AG04450 (cell line): ENCODE measurements at regions of chr15 and their contacts with region 1.

Region 1: GRCh38 chr15:69475769-69476358 is 23.2 kb downstream of the RPLP1 start:
- DNase-seq: no peak
- H3K4me3 ChIP-seq: no peak overlapping the region
- H3K27ac ChIP-seq: no peak overlapping the region
- H3K27me3 ChIP-seq: peaks cover 14% of the 10 kb centered on the region
- CTCF ChIP-seq: peak; percentile 99

Region 2: DNA sequence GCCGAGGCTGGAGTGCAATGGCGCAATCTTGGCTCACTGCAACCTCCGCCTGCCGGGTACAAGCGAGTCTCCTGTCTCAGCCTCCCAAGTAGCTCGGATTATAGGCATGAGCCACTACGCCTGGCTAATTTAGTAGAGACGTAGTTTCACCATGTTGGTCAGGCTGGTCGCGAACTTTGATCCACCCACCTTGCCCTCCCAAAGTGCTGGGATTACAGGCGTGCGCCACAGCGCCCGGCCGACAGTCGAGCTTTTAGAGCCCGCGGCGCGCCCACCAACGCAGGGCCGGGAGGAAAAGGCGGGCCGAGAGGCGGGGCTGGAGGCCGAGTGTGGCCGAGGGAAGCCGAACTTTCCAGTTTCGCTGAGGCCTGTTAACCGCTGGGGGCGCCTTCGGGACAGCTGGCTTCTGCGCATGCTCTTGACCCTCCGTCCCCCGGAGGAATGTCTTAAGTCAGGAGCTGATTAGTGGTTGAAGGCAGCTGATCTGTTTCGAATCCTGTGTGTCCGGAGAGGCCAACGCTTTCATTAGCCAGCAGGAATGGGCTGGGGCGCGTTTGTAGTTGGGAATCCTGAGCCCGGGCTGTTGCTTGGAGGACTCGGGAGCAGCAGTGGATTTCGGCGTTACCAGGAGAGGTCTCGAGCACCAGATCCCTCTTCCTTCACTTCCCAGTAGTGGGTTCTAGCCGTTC is 13.2 kb before region 1 on chr15:
- CTCF ChIA-PET with region 1: interaction called, 22 read pairs
- POLR2A ChIA-PET with region 1: no interaction called
- DNase-seq: peak; percentile 98
- H3K4me3 ChIP-seq: peak overlapping the region; percentile 61
- H3K27ac ChIP-seq: peak overlapping the region; percentile 98
- H3K27me3 ChIP-seq: no peaks in the 10 kb centered on the region
- CTCF ChIP-seq: peak; percentile 89

Region 3: DNA sequence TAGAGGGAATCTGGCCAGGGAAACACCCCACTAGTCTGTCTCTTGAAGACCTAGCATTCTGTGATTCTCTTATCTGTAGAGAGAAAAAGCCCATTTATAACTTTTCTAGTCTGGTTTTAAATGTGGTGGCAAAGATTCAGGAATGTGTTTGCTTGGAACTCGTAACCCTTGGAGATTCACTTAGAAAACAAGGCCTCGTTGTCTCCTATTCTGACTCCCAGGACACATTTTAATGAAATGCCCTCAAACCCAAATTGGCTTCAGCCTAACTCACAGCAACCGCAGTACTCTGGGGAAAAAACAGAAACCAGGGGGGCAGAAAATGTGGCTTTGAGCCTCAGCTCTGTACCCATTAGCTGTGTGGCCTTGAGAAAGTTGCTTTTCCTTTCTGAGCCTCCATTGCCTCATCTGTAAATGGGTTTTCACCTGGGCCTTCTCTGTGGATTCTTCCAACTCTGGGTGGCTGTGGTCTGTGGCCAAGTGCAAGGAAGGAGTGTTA is 13.3 kb after region 1 on chr15:
- CTCF ChIA-PET with region 1: interaction called, 17 read pairs
- POLR2A ChIA-PET with region 1: no interaction called
- DNase-seq: no peak
- H3K4me3 ChIP-seq: no peak overlapping the region
- H3K27ac ChIP-seq: no peak overlapping the region
- H3K27me3 ChIP-seq: peaks cover 46% of the 10 kb centered on the region
- CTCF ChIP-seq: no peak

Region 4: DNA sequence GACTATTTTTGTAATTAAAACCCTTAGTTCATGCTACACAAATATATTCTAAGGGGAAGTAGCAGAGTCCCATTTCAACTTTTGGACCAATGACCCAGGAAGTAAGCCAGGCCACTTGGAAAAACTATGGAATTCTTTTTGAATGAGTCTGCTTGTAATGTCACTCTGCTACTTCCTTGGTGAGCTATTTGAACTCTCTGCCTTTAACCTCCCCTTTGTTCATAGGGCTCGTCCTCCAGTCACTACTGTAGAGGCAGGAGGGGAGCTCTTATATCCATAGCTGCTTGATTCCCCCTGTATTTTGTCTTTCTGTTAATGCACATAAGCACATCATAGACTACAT is 1167.9 kb after region 1 on chr15:
- CTCF ChIA-PET with region 1: interaction called, 10 read pairs
- POLR2A ChIA-PET with region 1: no interaction called
- DNase-seq: no peak
- H3K4me3 ChIP-seq: no peak overlapping the region
- H3K27ac ChIP-seq: no peak overlapping the region
- H3K27me3 ChIP-seq: no peaks in the 10 kb centered on the region
- CTCF ChIP-seq: no peak